ENCODE measurements at regions of chr6 and their contacts with region 1.

Region 1: GRCh38 chr6:30742316-30743098 is at the start of gene FLOT1:
- DNase-seq: peak; percentile 98 to 99 (median 99)
- H3K4me3 ChIP-seq: peak within 1 kb of the TSS; percentile 57 to 95 (median 76)
- H3K27ac ChIP-seq: peak within 1 kb of the TSS; percentile 93 to 98 (median 94)
- H3K4me1 ChIP-seq: peaks cover 28 to 61% of the 10 kb centered on the region in 2 donors
- H3K27me3 ChIP-seq: no peaks in the 10 kb centered on the region
- CTCF ChIP-seq: no peak
- POLR2A ChIP-seq: peak; percentile 68 to 73
- total RNA-seq, gene FLOT1: 162 to 449 (median 338) TPM

Region 2: DNA sequence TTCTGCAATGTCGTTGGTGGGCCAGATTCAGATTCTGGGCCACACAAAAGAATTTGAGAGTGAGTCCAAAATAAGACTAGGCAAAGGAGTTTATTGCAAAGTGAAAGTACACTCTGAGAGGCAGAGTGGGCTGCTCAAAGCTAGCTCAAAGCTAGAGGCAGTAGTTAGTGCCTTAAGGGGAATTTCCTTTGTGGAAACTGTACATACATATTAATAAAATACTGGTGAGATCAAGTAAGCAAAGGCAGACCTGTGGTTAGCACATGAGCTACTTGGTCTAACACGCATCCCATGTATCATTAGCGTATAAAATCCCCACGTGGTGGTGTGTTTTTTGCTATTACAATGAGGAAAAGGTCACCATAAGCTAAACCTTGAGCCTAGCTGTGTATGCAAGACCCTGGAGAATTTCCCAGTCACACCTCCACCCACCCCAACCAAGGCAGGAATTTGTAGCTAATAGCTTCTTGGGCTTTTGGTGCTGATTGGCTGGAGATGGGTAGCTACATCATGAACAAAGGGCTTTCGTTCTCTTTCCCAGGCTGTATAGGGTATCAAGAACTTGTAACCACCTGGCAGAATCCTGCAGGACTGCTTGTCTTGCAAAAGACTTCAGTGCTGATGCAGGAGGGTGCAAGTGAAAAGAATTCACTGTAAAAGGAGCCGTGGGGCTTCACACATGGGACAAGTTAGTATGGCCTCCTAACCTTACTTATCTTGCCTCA is 514.6 kb before region 1 on chr6:
- intact Hi-C with region 1: no loop called
- DNase-seq: no peak
- H3K4me3 ChIP-seq: no peak overlapping the region
- H3K27ac ChIP-seq: no peak overlapping the region
- H3K4me1 ChIP-seq: no peaks in the 10 kb centered on the region
- H3K27me3 ChIP-seq: no peaks in the 10 kb centered on the region
- CTCF ChIP-seq: no peak
- POLR2A ChIP-seq: no peak

Region 3: GRCh38 chr6:30774701-30775100 is 32.2 kb after region 1 on chr6:
- intact Hi-C with region 1: no loop called
- DNase-seq: no peak
- H3K4me3 ChIP-seq: no peak overlapping the region
- H3K27ac ChIP-seq: no peak overlapping the region
- H3K4me1 ChIP-seq: peaks cover 15 to 34% of the 10 kb centered on the region in 2 donors
- H3K27me3 ChIP-seq: no peaks in the 10 kb centered on the region
- CTCF ChIP-seq: no peak
- POLR2A ChIP-seq: no peak

Region 4: DNA sequence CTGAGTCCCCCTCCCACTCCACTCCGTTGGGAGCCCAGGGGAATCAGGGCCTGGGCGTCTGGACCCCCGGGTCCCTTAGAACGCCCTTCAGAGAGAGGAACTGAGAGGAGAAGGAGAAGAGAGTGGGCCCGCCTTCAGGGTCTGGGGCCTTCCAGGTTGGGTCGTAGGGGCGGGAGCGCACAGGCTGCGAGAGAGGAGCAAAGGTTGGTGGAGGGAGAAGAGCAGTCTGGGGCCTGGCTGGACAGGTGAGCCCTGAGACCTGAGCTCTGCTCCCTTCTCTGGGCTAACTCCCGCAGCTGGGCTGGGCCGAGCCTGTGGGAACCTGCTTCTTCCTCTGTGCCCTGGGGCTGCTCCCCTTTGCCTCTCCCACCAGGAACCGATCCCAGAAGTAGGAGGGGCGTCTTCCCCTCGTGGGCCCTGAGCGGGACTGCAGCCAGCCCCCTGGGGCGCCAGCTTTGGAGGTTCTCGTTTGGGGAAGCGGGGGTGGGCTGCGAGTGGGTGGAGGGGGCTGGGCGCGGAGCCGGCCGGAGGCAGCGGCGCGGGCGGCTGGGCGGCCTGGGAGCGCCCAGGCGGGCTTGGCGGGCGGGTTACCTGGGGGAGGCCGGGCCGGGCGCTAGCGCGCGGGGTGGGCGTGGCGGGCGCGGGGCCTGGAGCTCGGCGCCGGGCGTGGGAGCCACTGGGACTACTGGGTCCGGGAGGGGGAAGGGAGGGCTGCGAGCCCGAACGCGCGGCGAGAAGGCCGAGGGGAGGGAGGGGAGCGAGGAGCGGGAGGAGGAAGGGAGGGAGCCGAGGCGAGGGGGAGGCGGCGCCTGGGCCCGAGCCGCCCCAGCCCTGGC is 141.4 kb after region 1 on chr6 and contains the start of gene DDR1:
- intact Hi-C with region 1: loop called in 1 of 2 experiments (anchors 10 kb)
- DNase-seq: peak; percentile 75 to 83 (median 80)
- H3K4me3 ChIP-seq: peak within 1 kb of the TSS; percentile 41 to 93 (median 62)
- H3K27ac ChIP-seq: peak within 1 kb of the TSS in 4 of 5 donors; percentile 33 to 88 (median 68)
- H3K4me1 ChIP-seq: peaks cover 26 to 47% of the 10 kb centered on the region in 2 donors
- H3K27me3 ChIP-seq: no peaks in the 10 kb centered on the region
- CTCF ChIP-seq: no peak
- POLR2A ChIP-seq: no peak
- total RNA-seq, gene DDR1: 33.5 to 239 (median 81.2) TPM